ENCODE measurements at regions of chr4 and their contacts with region 1.

Region 1: GRCh38 chr4:169225058-169225751 is 45.6 kb downstream of the SH3RF1 start:
- DNase-seq: peak; percentile 11
- H3K4me3 Mint-ChIP-seq: no peak overlapping the region
- H3K27ac Mint-ChIP-seq: no peak overlapping the region
- H3K4me1 Mint-ChIP-seq: peaks cover 17% of the 10 kb centered on the region
- H3K27me3 Mint-ChIP-seq: no peaks in the 10 kb centered on the region
- CTCF ChIP-seq: no peak

Region 2: GRCh38 chr4:169205075-169205743 is 20.0 kb before region 1 on chr4:
- CTCF ChIA-PET with region 1: no interaction called
- intact Hi-C with region 1: loop called (anchors 2 kb)
- DNase-seq: no peak
- H3K4me3 Mint-ChIP-seq: no peak overlapping the region
- H3K27ac Mint-ChIP-seq: peak overlapping the region; percentile 53
- H3K4me1 Mint-ChIP-seq: peaks cover 50% of the 10 kb centered on the region
- H3K27me3 Mint-ChIP-seq: no peaks in the 10 kb centered on the region
- CTCF ChIP-seq: no peak

Region 3: DNA sequence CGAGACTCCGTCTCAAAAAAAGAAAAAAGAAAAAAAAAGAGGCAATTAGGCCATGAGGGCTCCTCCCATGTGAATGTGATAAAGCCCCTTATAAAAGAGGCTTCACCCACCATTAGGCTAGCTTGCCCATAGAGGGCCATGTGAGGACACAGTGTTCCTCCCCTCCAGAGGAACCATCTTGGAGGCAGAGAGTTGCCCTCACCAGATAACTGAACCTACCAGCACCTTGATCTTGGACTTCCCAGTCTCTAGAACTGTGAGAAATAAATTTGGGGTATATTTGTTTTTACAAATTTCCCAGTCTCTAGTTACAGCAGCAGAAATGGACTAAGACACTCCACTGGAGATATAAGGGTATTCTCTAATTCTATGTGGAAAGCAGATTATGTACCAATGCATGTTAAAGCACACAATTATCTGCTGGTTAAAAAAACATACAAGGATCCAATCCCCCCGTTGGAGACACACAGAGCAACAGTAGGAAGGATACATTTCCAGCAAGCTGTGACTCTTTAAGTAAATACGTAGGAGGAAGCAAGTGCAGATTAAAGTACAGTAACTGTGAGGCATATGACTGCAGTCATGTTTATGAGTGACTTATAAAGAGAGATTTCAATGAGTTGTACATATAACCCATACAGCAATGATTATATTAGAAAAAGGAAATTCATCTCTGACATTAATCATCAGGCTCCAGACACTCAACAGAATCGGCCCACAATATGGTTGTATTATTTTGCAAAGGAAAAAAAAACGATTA is 24.2 kb after region 1 on chr4:
- CTCF ChIA-PET with region 1: interaction called, 5 read pairs
- intact Hi-C with region 1: loop called (anchors 2 kb)
- DNase-seq: no peak
- H3K4me3 Mint-ChIP-seq: peak overlapping the region; percentile 31
- H3K27ac Mint-ChIP-seq: peak overlapping the region; percentile 99
- H3K4me1 Mint-ChIP-seq: peaks cover 45% of the 10 kb centered on the region
- H3K27me3 Mint-ChIP-seq: no peaks in the 10 kb centered on the region
- CTCF ChIP-seq: no peak

Measured in Calu3 (cell line).